Naive thymus-derived CD8-positive, alpha-beta T cell (primary cell): ENCODE measurements at regions of chr3 and their contacts with region 1.

Region 1: DNA sequence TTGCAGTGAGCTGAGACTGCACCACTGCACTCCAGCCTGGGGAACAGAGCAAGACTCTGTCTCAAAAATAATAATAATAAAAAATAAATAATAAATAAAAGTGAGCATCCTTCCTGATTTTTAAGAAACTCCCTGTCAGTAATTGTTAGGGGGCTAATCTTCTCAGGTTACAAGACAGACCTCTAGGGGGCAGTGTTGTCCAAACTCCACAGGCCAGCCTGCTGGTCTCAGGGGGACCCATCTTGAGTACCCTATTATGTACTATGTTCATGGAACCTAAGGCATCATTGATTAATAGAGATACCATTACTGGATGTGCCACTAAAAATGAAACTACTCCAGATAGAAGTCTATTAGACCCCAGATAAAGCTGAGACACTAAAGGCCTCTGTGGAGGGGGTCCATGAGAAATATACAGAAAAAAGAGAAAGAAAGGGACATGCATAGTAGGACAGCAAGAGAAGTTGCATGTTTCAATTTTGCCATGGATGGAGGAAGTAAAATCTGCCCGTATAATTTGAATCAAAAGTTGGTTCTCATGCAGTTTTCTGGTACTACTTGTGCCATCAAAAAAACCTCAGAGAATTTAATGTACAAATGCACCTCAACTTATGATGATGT is 85.5 kb upstream of the CDV3 start:
- DNase-seq: peak; percentile 40 to 87 (median 62)
- ATAC-seq: peak in 1 of 2 donors; percentile 12
- H3K4me3 Mint-ChIP-seq: peak overlapping the region; percentile 8 to 68 (median 44)
- H3K27ac Mint-ChIP-seq: peak overlapping the region; percentile 63 to 97 (median 94)
- H3K4me1 Mint-ChIP-seq: peaks cover 40 to 61% (median 51%) of the 10 kb centered on the region in 4 donors
- H3K27me3 Mint-ChIP-seq: no peaks in the 10 kb centered on the region

Region 2: DNA sequence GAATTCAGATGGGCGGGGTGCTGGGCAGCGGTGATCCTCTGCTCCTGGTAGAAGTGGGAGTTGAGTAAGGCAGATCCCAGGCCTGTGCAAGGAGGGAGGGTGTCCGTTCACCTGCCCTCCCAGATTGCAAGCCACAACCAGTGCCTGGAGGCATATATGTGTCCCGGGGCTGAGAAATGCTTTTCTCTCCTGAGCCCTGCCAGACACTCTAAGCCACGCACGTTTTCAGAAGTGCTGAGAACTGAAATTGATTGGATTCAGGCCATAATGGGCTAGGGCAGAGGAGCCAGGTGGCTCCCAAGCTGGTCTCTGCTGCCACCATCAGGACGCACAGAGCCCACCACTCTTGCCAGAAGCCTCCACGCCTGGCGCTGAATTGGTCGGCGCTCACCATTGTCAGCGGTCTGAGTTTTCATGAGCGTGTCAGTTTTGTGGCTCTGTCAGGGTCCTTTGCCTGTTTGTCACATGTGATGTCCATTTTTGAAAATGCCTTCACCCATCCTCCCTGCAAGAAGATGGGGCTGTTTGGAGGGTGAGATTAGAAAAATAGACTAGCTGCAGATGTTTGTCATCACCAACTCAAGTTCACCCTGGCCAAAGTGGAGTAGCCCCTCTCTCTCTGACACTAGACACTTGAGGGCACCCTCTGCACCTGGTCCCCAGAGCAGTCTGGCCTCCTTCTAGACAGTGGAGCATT is 103.6 kb before region 1 on chr3:
- POLR2A ChIA-PET with region 1: no interaction called
- DNase-seq: peak in 1 of 10 donors; percentile 7
- ATAC-seq: no peak
- H3K4me3 Mint-ChIP-seq: no peak overlapping the region
- H3K27ac Mint-ChIP-seq: no peak overlapping the region
- H3K4me1 Mint-ChIP-seq: peaks cover 0 to 2% (median 0%) of the 10 kb centered on the region in 4 donors
- H3K27me3 Mint-ChIP-seq: peaks cover 0 to 2% (median 0%) of the 10 kb centered on the region in 5 donors

Region 3: DNA sequence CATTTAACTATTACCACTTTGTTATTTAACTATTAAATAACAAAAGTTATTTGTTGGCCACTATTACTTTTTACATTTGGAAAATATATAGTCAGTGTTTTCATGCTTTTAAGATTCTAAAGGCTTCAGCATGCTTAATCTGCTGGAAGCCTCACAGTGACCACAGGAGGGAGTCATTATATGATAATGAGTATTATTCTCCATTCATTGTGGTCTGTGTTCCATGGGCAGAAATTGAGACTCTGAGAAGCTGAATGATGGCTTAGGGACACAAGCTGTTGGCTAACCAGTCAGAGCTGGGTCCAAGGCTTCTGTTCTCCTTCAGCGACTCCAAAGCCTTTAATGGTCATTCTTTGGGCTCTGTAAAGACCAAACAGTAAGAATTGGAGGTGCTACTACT is 23.5 kb before region 1 on chr3:
- POLR2A ChIA-PET with region 1: no interaction called
- DNase-seq: no peak
- ATAC-seq: no peak
- H3K4me3 Mint-ChIP-seq: no peak overlapping the region
- H3K27ac Mint-ChIP-seq: no peak overlapping the region
- H3K4me1 Mint-ChIP-seq: peaks cover 6 to 57% (median 50%) of the 10 kb centered on the region in 4 donors
- H3K27me3 Mint-ChIP-seq: no peaks in the 10 kb centered on the region

Region 4: DNA sequence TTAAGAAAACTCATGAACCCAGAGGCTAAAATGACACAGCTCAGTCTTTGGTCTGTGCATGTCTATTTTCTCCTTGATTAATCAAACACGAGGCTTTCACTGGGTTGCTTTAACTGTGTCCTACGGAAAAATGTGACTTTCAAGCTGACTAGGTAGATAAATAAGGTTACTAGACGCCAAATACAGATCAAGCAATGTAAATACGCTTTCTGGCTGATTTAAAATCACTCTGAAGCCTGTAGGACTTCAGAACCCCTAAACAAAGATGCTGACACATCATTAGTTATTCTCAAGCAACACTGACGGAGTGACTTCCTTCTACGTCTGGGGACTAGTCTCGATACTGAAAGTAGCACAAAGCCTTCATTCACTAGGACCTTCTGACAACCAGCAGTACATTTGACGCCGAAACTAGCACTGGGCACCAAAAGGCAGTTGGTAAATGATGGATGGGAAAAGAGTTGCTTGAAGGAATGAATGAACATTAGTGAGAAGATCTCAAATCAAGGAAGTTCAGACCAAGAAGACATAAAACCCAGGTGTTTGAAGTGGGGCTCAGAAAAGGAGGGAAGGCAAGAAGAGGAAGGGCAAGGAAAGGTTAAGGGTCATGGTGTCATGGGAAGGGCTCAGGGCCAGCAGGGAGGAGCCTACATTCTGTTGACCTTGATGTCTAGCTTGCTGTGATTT is 18.3 kb after region 1 on chr3:
- POLR2A ChIA-PET with region 1: interaction called, 29 read pairs
- DNase-seq: peak in 5 of 10 donors; percentile 22 to 54 (median 44)
- ATAC-seq: peak; percentile 96
- H3K4me3 Mint-ChIP-seq: peak overlapping the region; percentile 73 to 90 (median 85)
- H3K27ac Mint-ChIP-seq: peak overlapping the region; percentile 84 to 98 (median 94)
- H3K4me1 Mint-ChIP-seq: peaks cover 8 to 25% (median 15%) of the 10 kb centered on the region in 4 donors
- H3K27me3 Mint-ChIP-seq: no peaks in the 10 kb centered on the region

Region 5: DNA sequence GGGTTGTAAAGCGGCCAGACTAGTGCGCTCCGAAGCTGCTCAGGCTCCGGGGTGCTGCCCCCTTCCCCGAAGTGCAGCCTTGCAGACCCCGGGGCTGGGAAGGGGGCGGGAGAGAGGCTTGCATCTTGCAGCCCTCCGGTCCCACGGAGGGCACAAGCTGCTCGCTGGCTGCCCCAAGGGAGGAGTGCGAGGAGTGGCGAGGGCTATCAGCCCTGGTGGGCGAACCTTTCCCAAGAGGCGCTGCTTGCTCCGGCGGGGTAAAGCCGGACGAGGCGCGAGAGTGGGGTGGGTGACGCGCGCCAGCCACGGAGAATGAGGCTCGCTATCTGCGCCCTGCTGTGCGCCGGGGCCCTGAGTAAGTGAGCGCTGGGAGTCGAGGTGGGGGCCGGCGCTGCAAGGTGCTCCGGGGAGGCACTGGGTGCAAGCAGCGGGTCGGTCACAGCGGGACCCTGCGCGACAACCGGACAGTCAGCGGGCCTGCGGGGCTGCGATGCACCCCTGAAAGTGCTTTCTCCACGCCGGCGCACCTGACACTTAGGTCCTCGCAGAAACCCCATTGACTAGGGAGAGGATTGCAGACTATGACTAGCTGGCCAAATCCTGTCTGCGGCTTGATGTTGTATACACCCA is 186.4 kb after region 1 on chr3:
- POLR2A ChIA-PET with region 1: no interaction called
- DNase-seq: no peak
- ATAC-seq: peak in 1 of 2 donors; percentile 33
- H3K4me3 Mint-ChIP-seq: peak overlapping the region in 5 of 10 donors; percentile 20 to 69 (median 53)
- H3K27ac Mint-ChIP-seq: peak overlapping the region in 1 of 10 donors; percentile 40
- H3K4me1 Mint-ChIP-seq: peaks cover 5 to 16% (median 7%) of the 10 kb centered on the region in 4 donors
- H3K27me3 Mint-ChIP-seq: peaks cover 33 to 69% (median 55%) of the 10 kb centered on the region in 5 donors